Body of pancreas (tissue), 4 donors: ENCODE measurements at regions of chr10 and their contacts with region 1.

Region 1: DNA sequence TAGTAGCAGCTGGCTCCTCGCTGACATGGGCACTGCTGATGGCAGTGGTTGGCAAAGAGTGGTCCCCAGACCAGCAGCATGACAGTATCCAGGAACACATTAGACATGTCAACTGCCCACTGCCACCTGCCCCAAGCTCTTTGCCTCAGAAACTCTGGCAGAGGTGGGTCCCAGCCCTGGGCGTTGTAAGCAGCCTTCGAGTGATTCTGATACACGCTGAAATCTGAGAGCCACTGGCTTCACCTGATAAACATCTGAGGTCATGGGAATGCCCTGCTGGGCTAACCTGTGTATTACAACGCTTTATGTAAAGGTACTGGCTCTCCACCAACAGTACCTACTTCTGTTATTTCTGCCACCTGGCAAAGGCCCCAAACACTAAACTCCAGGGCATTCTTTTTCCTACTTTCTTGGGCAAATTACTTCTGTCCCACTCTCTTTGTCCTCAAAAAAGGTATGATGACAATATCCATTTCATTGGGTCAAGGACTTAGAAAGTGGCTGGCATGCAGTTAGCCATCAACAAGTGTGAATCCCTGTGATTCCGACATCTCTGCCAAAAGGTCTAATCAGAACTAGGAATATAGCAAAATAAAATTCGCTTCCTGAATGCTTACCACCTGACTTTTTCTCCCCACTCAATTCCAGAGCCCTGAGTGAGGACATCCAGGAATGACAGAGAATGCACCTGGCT is 9.2 kb downstream of the SGMS1 start:
- DNase-seq: peak; percentile 44 to 66 (median 54)
- ATAC-seq: peak; percentile 68
- H3K4me3 ChIP-seq: no peak overlapping the region
- H3K27ac ChIP-seq: peak overlapping the region; percentile 32 to 67 (median 62)
- H3K4me1 ChIP-seq: peaks cover 78% of the 10 kb centered on the region
- H3K27me3 ChIP-seq: no peaks in the 10 kb centered on the region
- CTCF ChIP-seq: peak in 5 of 7 experiments; percentile 16 to 57 (median 51)
- POLR2A ChIP-seq: no peak

Region 2: GRCh38 chr10:50552771-50553535 is 61.6 kb before region 1 on chr10:
- intact Hi-C with region 1: loop called (anchors 5 kb)
- DNase-seq: peak; percentile 23 to 53 (median 36)
- ATAC-seq: no peak
- H3K4me3 ChIP-seq: no peak overlapping the region
- H3K27ac ChIP-seq: peak overlapping the region in 2 of 4 donors; percentile 1 to 3
- H3K4me1 ChIP-seq: peaks cover 77% of the 10 kb centered on the region
- H3K27me3 ChIP-seq: no peaks in the 10 kb centered on the region
- CTCF ChIP-seq: peak in 5 of 7 experiments; percentile 11 to 46 (median 42)
- POLR2A ChIP-seq: no peak

Region 3: GRCh38 chr10:51109801-51110533 is 495.4 kb after region 1 on chr10:
- intact Hi-C with region 1: no loop called
- DNase-seq: no peak
- ATAC-seq: no peak
- H3K4me3 ChIP-seq: no peak overlapping the region
- H3K27ac ChIP-seq: no peak overlapping the region
- H3K4me1 ChIP-seq: no peaks in the 10 kb centered on the region
- H3K27me3 ChIP-seq: no peaks in the 10 kb centered on the region
- CTCF ChIP-seq: no peak
- POLR2A ChIP-seq: no peak